HepG2 (cell line): ENCODE measurements at regions of chr18 and their contacts with region 1.

Region 1: GRCh38 chr18:80034068-80034851 is at the start of gene RBFA:
- DNase-seq: peak; percentile 88
- ATAC-seq: peak; percentile 90
- H3K4me3 ChIP-seq: peak within 1 kb of the TSS; percentile 74 to 90 (median 86)
- H3K27ac ChIP-seq: peak within 1 kb of the TSS; percentile 79
- H3K4me1 ChIP-seq: peaks cover 37% of the 10 kb centered on the region
- H3K27me3 ChIP-seq: no peaks in the 10 kb centered on the region; a peak in 1 of 5 replicates
- CTCF ChIP-seq: peak; percentile 83
- EP300 ChIP-seq: no peak
- POLR2A ChIP-seq: peak; percentile 82 to 85
- RAD21 ChIP-seq: peak; percentile 76; the same call in 1 of the 2 replicates
- total RNA-seq, gene RBFA: 42.2 and 42.4 TPM in 2 replicates

Region 2: GRCh38 chr18:79951578-79952455 is 82.4 kb before region 1 on chr18 and contains the start of gene SLC66A2:
- CTCF ChIA-PET with region 1: no interaction called
- POLR2A ChIA-PET with region 1: interaction called, 15 read pairs
- in situ Hi-C with region 1: no loop called
- intact Hi-C with region 1: no loop called
- DNase-seq: peak; percentile 57
- ATAC-seq: peak; percentile 86
- H3K4me3 ChIP-seq: peak within 1 kb of the TSS; percentile 85 to 89 (median 88)
- H3K27ac ChIP-seq: peak within 1 kb of the TSS; percentile 55
- H3K4me1 ChIP-seq: peaks cover 54% of the 10 kb centered on the region
- H3K27me3 ChIP-seq: no peaks in the 10 kb centered on the region; a peak in 1 of 5 replicates
- CTCF ChIP-seq: no peak
- EP300 ChIP-seq: no peak
- POLR2A ChIP-seq: no peak
- RAD21 ChIP-seq: 0 out of 2 replicates have a peak, but pooled peaks have one; percentile 9
- total RNA-seq, gene SLC66A2: 30.3 and 41.9 TPM in 2 replicates

Region 3: DNA sequence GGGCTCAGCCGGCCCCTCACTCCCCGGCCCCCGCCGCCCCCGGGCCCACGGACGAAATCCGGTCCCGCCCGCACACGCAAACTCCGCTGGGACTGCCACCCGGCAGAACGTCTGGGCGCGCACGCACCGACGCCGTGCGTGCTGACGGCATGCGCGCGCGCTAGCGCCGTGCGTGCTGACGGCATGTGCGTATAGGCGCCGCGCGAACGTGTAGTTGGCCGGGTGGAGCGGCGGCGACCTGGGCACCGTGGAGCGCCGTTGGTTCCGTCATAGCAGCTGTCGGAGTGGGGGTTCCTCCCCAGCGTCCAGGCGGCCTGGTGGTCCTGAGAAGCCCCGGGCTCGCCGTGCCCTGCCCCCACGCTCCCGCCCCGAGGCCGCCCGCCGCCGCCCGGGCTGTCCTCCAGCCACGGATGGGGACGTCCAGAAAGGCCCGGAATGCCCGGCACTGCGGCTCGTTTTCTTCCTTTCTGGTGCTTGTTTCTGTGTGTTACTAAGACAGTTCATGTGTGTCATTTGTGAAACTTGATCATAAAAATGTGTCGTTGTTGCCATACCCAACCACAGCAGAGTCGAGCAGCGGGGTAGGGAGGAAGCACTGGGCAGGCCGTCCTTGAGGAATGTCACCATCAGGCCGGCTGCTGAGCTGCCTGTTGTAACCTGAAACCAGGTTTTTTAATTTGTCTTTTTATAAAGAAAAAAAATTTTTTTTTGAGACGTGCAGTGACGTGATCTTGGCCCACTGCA is 45.6 kb before region 1 on chr18 and contains the start of gene TXNL4A:
- CTCF ChIA-PET with region 1: no interaction called
- POLR2A ChIA-PET with region 1: interaction called, 39 read pairs
- in situ Hi-C with region 1: loop called (anchors 5 kb)
- intact Hi-C with region 1: loop called (anchors 2 kb)
- DNase-seq: peak; percentile 69
- ATAC-seq: peak; percentile 95
- H3K4me3 ChIP-seq: peak within 1 kb of the TSS; percentile 84 to 96 (median 85)
- H3K27ac ChIP-seq: peak within 1 kb of the TSS; percentile 85
- H3K4me1 ChIP-seq: peaks cover 51% of the 10 kb centered on the region
- H3K27me3 ChIP-seq: no peaks in the 10 kb centered on the region; a peak in 1 of 5 replicates
- CTCF ChIP-seq: no peak
- EP300 ChIP-seq: no peak
- POLR2A ChIP-seq: peak; percentile 80 to 95
- RAD21 ChIP-seq: peak; percentile 33
- total RNA-seq, gene TXNL4A: 192 and 202 TPM in 2 replicates

Region 4: DNA sequence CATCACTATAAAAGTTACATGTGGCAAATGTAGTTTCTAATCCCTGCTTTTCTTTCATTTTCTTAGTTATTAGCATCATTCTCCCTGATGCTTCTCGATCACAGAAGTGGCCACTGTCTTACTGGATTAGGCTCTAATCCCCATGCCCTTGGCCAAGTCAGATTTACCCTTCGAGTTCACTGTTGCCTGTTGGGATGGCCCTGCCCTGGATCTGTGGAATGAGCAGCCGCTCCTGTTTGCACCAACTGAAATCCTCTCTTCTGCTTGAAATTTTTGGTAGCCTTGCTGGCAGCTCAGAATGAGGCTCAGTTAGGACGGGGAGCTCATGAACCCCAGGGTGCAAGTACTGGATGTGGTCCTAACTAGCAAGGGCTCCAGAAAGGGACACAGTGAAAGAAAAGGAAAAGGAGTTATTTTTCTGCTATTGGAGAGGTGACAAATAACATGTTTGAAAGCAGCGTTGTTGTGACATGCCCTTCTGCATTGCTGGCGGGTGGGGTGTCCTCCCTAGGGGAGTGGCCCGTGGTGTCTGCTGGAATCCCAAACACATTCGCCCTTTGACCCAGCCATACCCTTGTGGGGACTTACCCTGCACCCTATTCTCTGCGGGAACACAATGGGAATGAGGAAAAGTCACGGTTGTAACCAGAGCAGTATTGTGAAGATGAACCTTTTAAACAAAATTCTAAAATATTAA is 34.5 kb after region 1 on chr18:
- CTCF ChIA-PET with region 1: no interaction called
- POLR2A ChIA-PET with region 1: no interaction called
- in situ Hi-C with region 1: no loop called
- intact Hi-C with region 1: no loop called
- DNase-seq: no peak
- ATAC-seq: peak; percentile 57
- H3K4me3 ChIP-seq: no peak overlapping the region
- H3K27ac ChIP-seq: no peak overlapping the region
- H3K4me1 ChIP-seq: peaks cover 8% of the 10 kb centered on the region
- H3K27me3 ChIP-seq: no peaks in the 10 kb centered on the region
- CTCF ChIP-seq: no peak
- EP300 ChIP-seq: no peak
- POLR2A ChIP-seq: no peak
- RAD21 ChIP-seq: no peak

Region 5: DNA sequence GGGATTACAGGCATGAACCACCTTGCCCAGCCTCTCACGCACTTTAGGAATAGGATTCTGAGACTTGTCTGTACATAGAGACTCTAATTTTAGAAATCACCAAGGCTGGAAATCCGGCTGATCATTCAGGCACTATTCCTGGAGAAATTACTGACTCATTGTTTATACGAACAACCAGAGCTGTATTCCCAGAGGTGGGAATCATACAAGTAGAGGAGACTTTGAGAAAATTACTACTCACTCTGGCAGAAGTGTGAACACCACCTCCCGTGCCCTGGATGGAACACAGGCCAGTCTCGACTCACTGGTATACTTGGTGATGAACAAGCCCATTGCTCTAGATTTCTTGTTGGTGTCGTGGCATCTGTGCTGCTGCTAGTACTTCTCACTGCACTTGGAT is 69.0 kb after region 1 on chr18:
- CTCF ChIA-PET with region 1: no interaction called
- POLR2A ChIA-PET with region 1: interaction called, 18 read pairs
- in situ Hi-C with region 1: loop called (anchors 5 kb)
- intact Hi-C with region 1: no loop called
- DNase-seq: no peak
- ATAC-seq: no peak
- H3K4me3 ChIP-seq: no peak overlapping the region
- H3K27ac ChIP-seq: no peak overlapping the region
- H3K4me1 ChIP-seq: peaks cover 52% of the 10 kb centered on the region
- H3K27me3 ChIP-seq: no peaks in the 10 kb centered on the region
- CTCF ChIP-seq: no peak
- EP300 ChIP-seq: no peak
- POLR2A ChIP-seq: no peak
- RAD21 ChIP-seq: no peak

Region 6: DNA sequence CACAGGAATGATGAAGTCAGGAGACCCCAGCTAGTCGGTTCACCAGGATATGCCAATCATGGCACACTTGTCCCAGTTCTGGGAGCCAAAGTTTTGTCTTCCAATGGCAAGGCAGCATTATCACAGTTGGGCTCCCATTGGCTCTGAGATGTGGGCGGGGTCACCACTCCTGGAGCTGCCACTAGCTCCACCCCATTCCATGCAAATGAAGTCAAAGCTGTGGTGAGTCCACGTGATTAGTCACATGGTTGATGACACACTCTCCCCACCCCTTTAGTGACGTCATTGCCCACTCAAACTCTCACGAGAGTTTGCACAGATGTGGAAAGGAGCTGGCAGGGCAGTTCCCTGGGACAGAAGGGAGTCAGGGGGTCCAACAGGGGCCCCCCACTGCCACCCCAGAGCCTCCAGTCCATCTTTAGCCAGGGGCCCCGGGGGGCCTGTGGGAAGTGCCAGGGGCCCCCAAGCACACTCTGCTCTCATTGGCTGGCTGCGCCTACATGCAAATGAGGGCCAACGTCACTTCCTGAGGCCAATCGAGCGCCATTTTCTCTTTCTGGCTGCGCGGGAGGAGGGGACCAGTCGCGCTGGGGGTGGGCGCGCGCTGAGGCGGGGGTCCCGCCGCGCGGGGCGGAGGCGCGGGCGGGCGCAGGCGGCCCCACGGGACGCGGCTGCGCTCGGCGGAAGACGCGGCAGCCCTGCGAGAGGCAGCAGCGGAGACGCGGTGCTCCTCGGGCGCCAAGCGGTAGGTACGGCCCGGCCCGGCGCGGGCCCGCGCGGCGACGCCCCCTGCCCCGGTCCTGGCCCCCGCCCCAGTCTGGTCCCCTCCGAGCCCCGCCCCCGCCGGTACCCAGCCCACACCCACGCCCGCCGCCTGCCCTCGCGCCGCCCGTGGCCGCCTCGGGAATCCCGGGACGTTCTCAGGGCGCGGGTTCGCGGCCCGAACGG is 74.7 kb after region 1 on chr18 and contains the start of gene ADNP2:
- CTCF ChIA-PET with region 1: no interaction called
- POLR2A ChIA-PET with region 1: interaction called, 18 read pairs
- in situ Hi-C with region 1: loop called (anchors 5 kb)
- intact Hi-C with region 1: loop called (anchors 2 kb)
- DNase-seq: peak; percentile 96
- ATAC-seq: peak; percentile 74
- H3K4me3 ChIP-seq: peak within 1 kb of the TSS; percentile 79 to 96 (median 88)
- H3K27ac ChIP-seq: peak within 1 kb of the TSS; percentile 85
- H3K4me1 ChIP-seq: peaks cover 89% of the 10 kb centered on the region
- H3K27me3 ChIP-seq: no peaks in the 10 kb centered on the region
- CTCF ChIP-seq: no peak
- EP300 ChIP-seq: no peak
- POLR2A ChIP-seq: peak; percentile 57 to 63; a peak in 3 of 4 replicates
- RAD21 ChIP-seq: no peak
- total RNA-seq, gene ADNP2: 25.5 and 28.6 TPM in 2 replicates